MCF 10A (cell line): ENCODE measurements at regions of chr2 and their contacts with region 1.

Region 1: GRCh38 chr2:135600915-135601314 is 69.6 kb downstream of the R3HDM1 start:
- DNase-seq: peak; percentile 5
- H3K4me3 Mint-ChIP-seq: no peak overlapping the region
- H3K27ac Mint-ChIP-seq: peak overlapping the region; percentile 29
- H3K4me1 Mint-ChIP-seq: no peaks in the 10 kb centered on the region
- H3K27me3 Mint-ChIP-seq: no peaks in the 10 kb centered on the region
- CTCF ChIP-seq: no peak

Region 2: GRCh38 chr2:135473567-135473966 is 127.3 kb before region 1 on chr2:
- CTCF ChIA-PET with region 1: no interaction called
- POLR2A ChIA-PET with region 1: no interaction called
- intact Hi-C with region 1: loop called (anchors 1 kb)
- DNase-seq: peak; percentile 40
- H3K4me3 Mint-ChIP-seq: no peak overlapping the region
- H3K27ac Mint-ChIP-seq: no peak overlapping the region
- H3K4me1 Mint-ChIP-seq: no peaks in the 10 kb centered on the region
- H3K27me3 Mint-ChIP-seq: no peaks in the 10 kb centered on the region
- CTCF ChIP-seq: peak; percentile 35

Region 3: GRCh38 chr2:135585586-135585985 is 15.3 kb before region 1 on chr2:
- CTCF ChIA-PET with region 1: interaction called, 16 read pairs
- POLR2A ChIA-PET with region 1: interaction called, 3 read pairs
- intact Hi-C with region 1: no loop called
- DNase-seq: no peak
- H3K4me3 Mint-ChIP-seq: no peak overlapping the region
- H3K27ac Mint-ChIP-seq: no peak overlapping the region
- H3K4me1 Mint-ChIP-seq: no peaks in the 10 kb centered on the region
- H3K27me3 Mint-ChIP-seq: no peaks in the 10 kb centered on the region
- CTCF ChIP-seq: peak; percentile 15